H1 (cell line): ENCODE measurements at regions of chr10 and their contacts with region 1.

Region 1: DNA sequence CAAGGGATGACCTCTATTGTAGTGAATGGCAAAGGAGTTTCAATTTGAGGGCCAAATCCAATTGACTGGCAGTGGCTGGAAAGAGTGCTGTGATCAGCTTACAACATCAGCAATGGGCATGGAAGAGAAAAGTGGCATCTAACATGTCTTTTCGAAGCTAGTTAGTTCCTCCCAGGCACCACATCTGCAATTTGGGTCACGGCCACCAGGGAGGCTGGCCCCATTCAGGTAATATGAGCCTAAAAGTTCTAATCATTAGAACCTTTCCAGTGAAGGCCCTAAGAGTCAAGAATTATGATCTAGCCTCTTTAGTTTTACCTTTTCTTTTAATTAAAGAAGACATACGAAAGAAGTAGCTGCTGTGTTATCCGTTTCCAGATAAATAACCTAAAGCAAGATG is 17.3 kb downstream of the CRTAC1 start:
- DNase-seq: no peak
- H3K4me3 ChIP-seq: no peak overlapping the region
- H3K27ac ChIP-seq: no peak overlapping the region
- H3K4me1 ChIP-seq: peaks cover 0 to 3% (median under 1%) of the 10 kb centered on the region in 4 experiments; a peak in 1 of 7 replicates
- H3K27me3 ChIP-seq: no peaks in the 10 kb centered on the region; a peak in 1 of 7 replicates
- CTCF ChIP-seq: peak; percentile 15 to 59 (median 55); a peak in 3 of 4 replicates
- EP300 ChIP-seq: no peak
- POLR2A ChIP-seq: no peak
- RAD21 ChIP-seq: peak in 1 of 2 experiments; percentile 11; a peak in 1 of 4 replicates

Region 2: DNA sequence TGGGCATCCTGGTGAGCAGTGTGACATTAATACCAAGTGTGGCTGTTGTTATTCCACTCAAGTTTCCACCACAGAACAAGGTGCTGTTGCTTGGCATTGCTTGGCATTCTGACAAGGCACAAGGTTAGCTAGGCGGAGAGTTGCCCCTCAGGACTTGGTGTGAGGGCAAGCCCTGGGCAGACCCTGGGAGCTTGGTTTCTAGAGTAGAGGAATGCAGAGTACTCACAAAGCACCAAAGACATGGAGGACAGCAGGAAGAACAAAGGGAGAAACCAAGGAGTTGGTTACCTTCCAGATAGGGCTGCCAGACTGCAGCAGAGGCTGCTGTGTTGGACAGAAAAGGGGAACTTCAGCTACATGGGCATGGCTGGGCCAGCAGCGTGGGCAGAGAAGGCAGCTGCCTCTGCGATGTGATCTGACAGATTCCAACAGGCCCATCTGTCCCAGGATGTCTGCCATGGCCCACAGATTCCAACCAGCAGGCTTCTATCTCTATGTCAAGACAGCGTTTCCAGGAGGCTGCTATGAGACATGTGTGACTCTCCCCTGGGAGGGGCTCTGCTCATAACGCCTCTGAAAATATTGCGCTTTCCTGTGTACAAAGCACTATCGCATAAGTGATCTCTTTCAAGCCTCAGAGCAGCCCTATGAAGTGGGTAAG is 161.7 kb before region 1 on chr10:
- CTCF ChIA-PET with region 1: no interaction called
- POLR2A ChIA-PET with region 1: no interaction called
- DNase-seq: no peak
- H3K4me3 ChIP-seq: no peak overlapping the region
- H3K27ac ChIP-seq: no peak overlapping the region
- H3K4me1 ChIP-seq: peaks cover 0 to 4% (median under 1%) of the 10 kb centered on the region in 4 experiments; a peak in 6 of 7 replicates
- H3K27me3 ChIP-seq: peaks cover 0 to 25% (median 14%) of the 10 kb centered on the region in 4 experiments; a peak in 6 of 7 replicates
- CTCF ChIP-seq: no peak
- EP300 ChIP-seq: no peak
- POLR2A ChIP-seq: no peak
- RAD21 ChIP-seq: no peak

Region 3: GRCh38 chr10:97999066-97999922 is 13.8 kb before region 1 on chr10:
- CTCF ChIA-PET with region 1: interaction called, 29 read pairs
- POLR2A ChIA-PET with region 1: no interaction called
- DNase-seq: no peak
- H3K4me3 ChIP-seq: no peak overlapping the region
- H3K27ac ChIP-seq: no peak overlapping the region
- H3K4me1 ChIP-seq: peaks cover 0 to 3% (median 0%) of the 10 kb centered on the region in 4 experiments; a peak in 3 of 7 replicates
- H3K27me3 ChIP-seq: no peaks in the 10 kb centered on the region; a peak in 1 of 7 replicates
- CTCF ChIP-seq: no peak
- EP300 ChIP-seq: no peak
- POLR2A ChIP-seq: no peak
- RAD21 ChIP-seq: no peak

Region 4: GRCh38 chr10:98038288-98038687 is 25.2 kb after region 1 on chr10:
- CTCF ChIA-PET with region 1: interaction called, 26 read pairs
- POLR2A ChIA-PET with region 1: no interaction called
- DNase-seq: peak; percentile 39 to 70
- H3K4me3 ChIP-seq: no peak overlapping the region
- H3K27ac ChIP-seq: no peak overlapping the region
- H3K4me1 ChIP-seq: peaks cover 2 to 8% (median 3%) of the 10 kb centered on the region in 4 experiments; a peak in 4 of 7 replicates
- H3K27me3 ChIP-seq: peaks cover 12 to 58% (median 44%) of the 10 kb centered on the region in 4 experiments
- CTCF ChIP-seq: no peak
- EP300 ChIP-seq: no peak
- POLR2A ChIP-seq: no peak
- RAD21 ChIP-seq: 0 out of 4 replicates have a peak, but pooled peaks have one; percentile 3 to 20